ENCODE measurements at regions of chr12 and their contacts with region 1.

Region 1: GRCh38 chr12:56468216-56469006 is at the start of gene SPRYD4:
- DNase-seq: peak; percentile 90 to 97 (median 95)
- H3K4me3 ChIP-seq: peak within 1 kb of the TSS; percentile 56 to 99 (median 85)
- H3K27ac ChIP-seq: peak within 1 kb of the TSS; percentile 32 to 96 (median 91)
- H3K27me3 ChIP-seq: no peaks in the 10 kb centered on the region
- CTCF ChIP-seq: peak; percentile 45 to 94 (median 76)
- total RNA-seq, gene SPRYD4: 1.7 to 4.8 (median 2.6) TPM

Region 2: DNA sequence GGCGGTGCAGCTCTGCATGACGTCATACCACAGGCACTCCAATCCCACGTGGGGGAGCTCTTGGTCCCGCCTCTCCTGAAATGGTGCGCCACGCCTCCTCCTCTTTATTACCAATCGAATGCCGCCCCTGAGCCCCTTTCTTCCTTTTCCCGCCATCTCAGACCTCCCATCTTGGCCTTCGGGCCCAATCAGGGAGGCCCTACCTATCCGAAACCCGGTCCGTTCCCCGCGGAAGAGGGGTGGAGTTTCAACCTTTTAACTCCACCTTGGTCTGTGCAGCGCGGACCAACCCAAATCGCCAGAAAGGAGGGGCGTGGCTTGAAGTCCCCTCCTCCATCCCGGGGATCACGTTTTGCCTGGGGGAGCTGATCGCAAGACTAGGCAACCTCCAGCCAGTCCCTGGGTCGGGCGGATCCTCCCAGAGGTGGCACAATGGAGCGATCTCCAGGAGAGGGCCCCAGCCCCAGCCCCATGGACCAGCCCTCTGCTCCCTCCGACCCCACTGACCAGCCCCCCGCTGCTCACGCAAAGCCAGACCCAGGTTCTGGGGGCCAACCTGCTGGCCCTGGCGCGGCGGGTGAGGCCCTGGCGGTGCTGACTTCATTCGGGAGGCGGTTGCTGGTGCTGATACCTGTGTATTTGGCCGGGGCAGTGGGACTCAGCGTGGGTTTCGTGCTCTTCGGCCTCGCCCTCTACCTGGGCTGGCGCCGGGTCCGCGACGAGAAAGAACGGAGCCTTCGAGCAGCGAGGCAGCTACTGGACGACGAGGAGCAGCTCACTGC is 340.3 kb before region 1 on chr12 and contains the start of gene ESYT1:
- intact Hi-C with region 1: loop called in 1 of 2 experiments (anchors 10 kb)
- DNase-seq: peak; percentile 81 to 99 (median 98)
- H3K4me3 ChIP-seq: peak within 1 kb of the TSS; percentile 63 to 98 (median 85)
- H3K27ac ChIP-seq: peak within 1 kb of the TSS; percentile 38 to 93 (median 84)
- H3K27me3 ChIP-seq: no peaks in the 10 kb centered on the region
- CTCF ChIP-seq: peak in 43 of 56 donors; percentile 3 to 63 (median 34)
- total RNA-seq, gene ESYT1: 32.5 to 86.2 (median 56.5) TPM

Region 3: DNA sequence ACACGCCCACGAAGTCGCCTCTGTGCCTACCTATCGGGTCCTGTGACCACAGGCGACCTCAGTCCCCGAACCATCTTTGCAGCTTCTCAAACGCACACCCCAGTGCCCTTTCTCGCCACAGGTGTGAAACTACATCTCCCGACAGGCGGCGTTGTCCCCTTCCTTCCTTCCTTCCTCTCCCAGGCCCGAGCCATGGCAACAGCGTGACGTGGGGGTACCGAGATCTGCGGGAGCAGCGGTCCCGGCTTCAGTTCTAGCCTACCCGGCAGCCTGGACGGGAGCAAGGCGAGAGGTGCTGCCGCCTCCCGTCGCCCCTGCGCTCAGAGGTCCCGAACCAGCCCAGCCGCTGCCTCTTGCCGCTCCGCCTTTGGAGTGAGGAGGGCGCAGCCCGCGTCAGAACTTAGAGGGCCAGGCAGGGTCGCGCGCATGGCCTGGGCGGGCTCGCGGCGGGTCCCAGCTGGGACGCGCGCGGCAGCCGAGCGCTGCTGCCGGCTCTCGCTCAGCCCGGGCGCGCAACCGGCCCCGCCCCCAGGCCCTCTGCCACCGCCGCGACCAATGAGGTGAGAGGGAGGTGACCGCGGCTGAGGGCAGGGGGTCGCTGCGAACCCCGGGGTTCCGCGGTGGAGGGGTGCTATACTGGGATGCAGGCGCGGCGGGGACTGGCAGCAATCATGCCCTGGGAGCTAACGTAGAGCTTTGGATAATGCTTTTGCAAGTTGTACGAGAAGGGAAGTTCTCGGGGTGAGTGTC is 201.5 kb before region 1 on chr12 and contains the start of gene COQ10A:
- intact Hi-C with region 1: loop called in 1 of 2 experiments (anchors 5 kb)
- DNase-seq: peak; percentile 75 to 93 (median 88)
- H3K4me3 ChIP-seq: peak within 1 kb of the TSS; percentile 62 to 94 (median 77)
- H3K27ac ChIP-seq: peak within 1 kb of the TSS; percentile 34 to 96 (median 89)
- H3K27me3 ChIP-seq: no peaks in the 10 kb centered on the region
- CTCF ChIP-seq: peak; percentile 41 to 85 (median 66)
- total RNA-seq, gene COQ10A: 10.0 to 26.9 (median 17.8) TPM

Region 4: DNA sequence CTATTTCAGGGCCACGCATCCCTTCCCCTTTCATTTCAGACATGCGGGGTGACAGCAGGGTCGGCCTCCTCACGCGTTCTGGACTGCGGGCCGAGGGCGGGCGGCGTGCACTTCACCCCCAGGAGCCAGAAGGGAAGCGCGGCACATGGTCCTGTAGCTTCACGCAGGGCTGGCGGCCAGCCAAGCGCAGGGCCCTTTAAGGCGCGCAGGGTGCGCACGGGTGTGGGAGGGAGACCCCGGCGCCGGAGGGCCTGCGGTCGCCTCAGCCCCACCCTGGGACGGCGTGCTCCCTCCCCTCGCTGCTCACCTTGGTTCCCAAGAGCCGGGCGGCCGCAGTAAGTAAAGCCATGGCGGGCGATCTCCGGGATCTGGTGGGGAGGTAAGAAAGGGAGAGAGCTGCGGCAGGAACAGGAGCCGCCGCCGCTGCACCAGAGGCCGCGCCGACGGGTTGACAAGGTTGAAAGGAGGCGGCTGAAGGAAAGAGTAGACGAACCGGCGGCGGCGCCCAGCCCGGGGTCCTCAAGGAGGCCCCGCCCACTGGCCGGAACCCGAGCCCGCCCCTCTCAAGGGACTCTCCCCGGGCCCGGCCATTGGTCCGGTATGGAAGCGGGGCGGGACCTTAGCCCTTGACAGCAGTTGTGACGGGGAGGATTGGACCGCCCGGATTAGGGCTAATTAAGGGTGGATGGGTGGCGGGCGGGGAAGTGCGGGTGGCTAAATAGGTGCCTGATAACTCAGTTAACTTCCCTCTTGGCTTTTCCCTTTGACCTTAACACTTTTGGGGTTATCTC is 168.4 kb before region 1 on chr12 and contains the start of gene CS:
- intact Hi-C with region 1: loop called in 1 of 2 experiments (anchors 2 kb)
- DNase-seq: peak; percentile 96 to 99 (median 99)
- H3K4me3 ChIP-seq: peak within 1 kb of the TSS; percentile 70 to 99 (median 91)
- H3K27ac ChIP-seq: peak within 1 kb of the TSS; percentile 59 to 98 (median 91)
- H3K27me3 ChIP-seq: no peaks in the 10 kb centered on the region
- CTCF ChIP-seq: peak in 22 of 56 donors; percentile 3 to 49 (median 23)
- total RNA-seq, gene CS: 122 to 244 (median 194) TPM

Region 5: DNA sequence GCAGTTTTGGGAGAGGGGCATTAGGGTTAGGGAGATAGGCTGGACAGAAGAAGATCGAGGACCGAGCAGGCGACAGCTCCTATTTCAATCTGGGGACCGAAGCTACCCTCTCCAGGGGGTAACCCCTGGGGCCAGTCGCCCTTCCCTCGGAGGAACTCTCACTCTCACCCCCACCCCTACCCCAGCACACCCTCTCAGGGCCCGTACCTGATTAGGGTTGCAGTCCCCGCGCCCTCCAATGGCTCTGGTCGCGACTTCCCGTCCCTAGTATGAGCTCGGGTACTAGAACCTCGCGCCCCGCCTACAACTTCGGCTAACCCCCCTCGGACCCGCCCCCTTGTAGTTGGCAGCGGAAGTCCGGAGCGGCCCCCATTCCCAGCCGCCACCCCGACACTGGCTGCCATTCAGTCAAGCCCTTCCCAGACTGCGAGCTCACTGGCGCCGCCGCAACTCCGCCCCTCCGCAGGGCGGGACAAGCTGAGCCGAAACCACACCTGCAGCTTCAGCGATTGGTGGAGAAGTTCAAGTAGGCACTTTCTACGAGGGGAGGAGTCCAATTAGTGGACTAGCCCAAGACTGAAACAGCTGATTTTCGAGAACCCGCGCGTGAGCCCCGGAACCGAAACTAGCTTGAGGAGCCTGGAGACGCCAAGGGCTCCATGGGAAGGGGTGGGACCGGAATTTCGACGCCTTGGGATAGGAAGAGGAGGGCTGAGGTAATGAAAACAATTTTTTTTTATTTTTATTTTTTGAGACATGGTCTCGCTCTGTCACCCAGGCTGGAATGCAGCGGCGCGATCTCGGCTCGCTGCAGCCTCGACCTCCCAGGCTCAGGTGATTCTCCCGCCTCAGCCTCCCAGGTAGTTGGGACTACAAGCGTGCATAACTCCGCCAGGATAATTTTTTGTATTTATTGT is 108.3 kb before region 1 on chr12 and contains the start of gene STAT2:
- intact Hi-C with region 1: loop called in 1 of 2 experiments (anchors 2 kb)
- DNase-seq: peak; percentile 95 to 99 (median 99)
- H3K4me3 ChIP-seq: peak within 1 kb of the TSS; percentile 62 to 99 (median 86)
- H3K27ac ChIP-seq: peak within 1 kb of the TSS; percentile 48 to 99 (median 93)
- H3K27me3 ChIP-seq: no peaks in the 10 kb centered on the region
- CTCF ChIP-seq: peak in 51 of 56 donors; percentile 3 to 70 (median 40)
- total RNA-seq, gene STAT2: 94.6 to 278 (median 154) TPM

Region 6: GRCh38 chr12:56448860-56449621 is 19.4 kb before region 1 on chr12 and contains the start of gene TIMELESS:
- intact Hi-C with region 1: loop called (anchors 2 kb)
- DNase-seq: peak; percentile 78 to 94 (median 87)
- H3K4me3 ChIP-seq: peak within 1 kb of the TSS; percentile 48 to 94 (median 79)
- H3K27ac ChIP-seq: peak within 1 kb of the TSS; percentile 76 to 98 (median 92)
- H3K27me3 ChIP-seq: no peaks in the 10 kb centered on the region
- CTCF ChIP-seq: peak in 43 of 56 donors; percentile 9 to 66 (median 36)
- total RNA-seq, gene TIMELESS: 1.8 to 8.2 (median 4.4) TPM

Region 7: DNA sequence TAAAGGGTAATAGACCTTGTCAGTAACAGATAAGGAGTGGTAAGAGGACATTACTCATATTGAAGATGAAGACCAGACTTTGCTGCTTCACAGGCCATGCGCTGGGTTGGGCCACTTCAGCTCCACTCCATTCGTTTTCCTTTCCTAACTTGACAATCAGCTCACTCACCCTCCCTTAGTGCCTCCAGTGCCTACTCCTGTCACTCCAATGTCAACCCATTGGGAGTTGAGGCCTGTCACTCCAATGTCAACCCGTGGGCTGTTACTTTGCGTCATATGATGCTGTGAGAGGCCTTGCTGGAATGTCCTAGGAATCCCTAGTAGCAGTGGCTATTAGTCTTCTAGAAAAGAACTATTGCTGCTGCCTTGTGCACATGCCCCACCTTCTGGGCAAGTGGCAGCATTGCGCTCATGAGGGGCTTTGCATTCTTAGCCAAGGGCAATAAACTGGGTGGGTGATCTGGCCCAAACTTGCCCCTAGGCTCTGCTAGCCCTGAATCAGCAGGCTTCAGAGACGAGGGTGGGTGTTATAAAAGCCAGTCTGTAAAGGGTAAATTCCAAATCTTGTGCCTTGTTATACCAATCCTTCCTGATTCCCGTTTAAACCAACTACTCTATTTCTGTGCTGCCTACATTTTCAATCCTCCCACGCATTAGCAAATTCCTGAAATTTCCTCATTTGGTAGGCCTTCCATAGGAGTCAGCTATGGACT is 125.7 kb after region 1 on chr12:
- intact Hi-C with region 1: no loop called
- DNase-seq: peak in 6 of 10 donors; percentile 18 to 58 (median 49)
- H3K4me3 ChIP-seq: no peak overlapping the region
- H3K27ac ChIP-seq: peak overlapping the region in 55 of 59 donors; percentile 12 to 93 (median 62)
- H3K27me3 ChIP-seq: no peaks in the 10 kb centered on the region
- CTCF ChIP-seq: peak; percentile 23 to 76 (median 68)